ENCODE measurements at regions of chr2 and their contacts with region 1.

Region 1: GRCh38 chr2:191688934-191689695 is 11.2 kb downstream of the NABP1 start:
- DNase-seq: no peak
- ATAC-seq: peak; percentile 81
- H3K4me3 ChIP-seq: no peak overlapping the region
- H3K27ac ChIP-seq: no peak overlapping the region
- H3K4me1 ChIP-seq: peaks cover 11% of the 10 kb centered on the region
- H3K27me3 ChIP-seq: no peaks in the 10 kb centered on the region
- CTCF ChIP-seq: no peak

Region 2: GRCh38 chr2:191571163-191571769 is 117.8 kb before region 1 on chr2:
- intact Hi-C with region 1: loop called (anchors 5 kb)
- DNase-seq: no peak
- ATAC-seq: peak; percentile 75 to 77
- H3K4me3 ChIP-seq: peak overlapping the region; percentile 30
- H3K27ac ChIP-seq: peak overlapping the region; percentile 57
- H3K4me1 ChIP-seq: peaks cover 6% of the 10 kb centered on the region
- H3K27me3 ChIP-seq: no peaks in the 10 kb centered on the region
- CTCF ChIP-seq: peak; percentile 26